Right ventricle myocardium superior (tissue), 1 donor: ENCODE measurements at regions of chr10 and their contacts with region 1.

Region 1: DNA sequence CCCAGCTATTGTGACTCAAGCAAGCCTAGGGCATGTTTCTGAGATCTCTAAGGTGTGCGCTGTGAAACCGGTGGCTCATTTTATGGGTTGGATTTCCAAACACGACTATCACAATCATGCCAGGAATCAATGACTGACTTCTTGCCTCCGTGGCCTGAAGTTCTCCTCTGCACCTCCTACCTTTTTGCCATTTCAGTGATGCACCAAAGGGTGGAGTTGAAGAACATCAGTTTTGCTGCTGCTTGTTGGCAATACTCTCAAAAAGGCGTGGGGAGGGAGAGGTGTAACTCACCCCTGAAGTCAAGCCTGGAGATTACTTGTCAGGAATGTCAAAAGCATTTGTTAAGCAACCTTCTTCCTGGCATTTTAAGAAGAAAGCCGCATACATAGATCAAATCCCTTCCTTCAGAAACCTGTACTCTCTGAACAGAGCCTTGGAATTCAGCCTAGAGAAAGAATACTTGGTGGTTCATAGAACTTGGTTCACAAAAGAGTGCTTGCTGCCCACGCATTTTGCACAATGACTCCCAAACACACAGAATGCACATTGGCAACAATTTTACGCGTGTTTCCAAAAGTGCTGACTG is 41.0 kb downstream of the KIAA1217 start:
- DNase-seq: no peak
- ATAC-seq: no peak

Region 2: GRCh38 chr10:23886355-23886754 is 363.6 kb before region 1 on chr10:
- intact Hi-C with region 1: no loop called
- DNase-seq: no peak
- ATAC-seq: peak; percentile 68

Region 3: GRCh38 chr10:24128066-24128730 is 121.7 kb before region 1 on chr10:
- intact Hi-C with region 1: no loop called
- DNase-seq: no peak
- ATAC-seq: no peak

Region 4: DNA sequence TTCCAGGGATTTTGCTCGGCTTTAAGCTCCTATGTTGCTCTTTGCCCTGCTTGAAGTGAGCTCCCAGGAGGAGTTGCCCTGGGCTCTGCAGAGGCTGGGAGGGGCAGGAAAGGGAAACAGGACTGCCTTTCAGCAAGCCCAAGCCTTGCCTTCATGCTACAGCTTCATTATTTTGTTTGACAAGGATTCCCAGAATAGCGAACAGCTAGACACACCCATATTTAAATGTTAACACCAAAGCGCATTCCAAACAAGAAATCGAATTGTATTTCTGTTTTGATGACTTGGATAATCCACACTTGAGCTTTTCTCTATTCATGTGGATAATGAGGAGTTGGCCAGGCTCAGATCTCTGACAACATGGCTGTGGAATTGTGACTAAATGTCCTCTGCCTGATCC is 34.7 kb before region 1 on chr10:
- intact Hi-C with region 1: loop called (anchors 5 kb)
- DNase-seq: peak; percentile 47
- ATAC-seq: peak; percentile 42

Region 5: DNA sequence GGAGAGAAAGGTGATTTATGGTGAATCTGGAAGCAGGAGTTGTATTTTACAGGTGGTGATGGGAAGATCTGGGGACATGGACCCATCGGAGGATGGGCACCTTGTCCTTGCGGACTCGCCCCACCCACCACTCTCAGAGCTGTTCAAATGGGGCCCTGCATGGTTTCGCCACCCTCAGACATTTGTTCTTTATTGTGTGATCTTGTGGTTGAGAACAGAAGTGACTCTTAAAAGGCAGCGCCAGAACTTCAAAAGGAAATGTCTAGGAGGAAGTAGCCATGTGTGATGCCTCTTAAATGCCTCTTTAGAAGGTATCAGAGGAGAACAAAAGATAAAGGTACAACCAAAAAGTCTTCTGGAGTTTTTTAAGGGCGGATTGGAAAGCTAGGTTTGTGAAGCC is 164.7 kb after region 1 on chr10:
- intact Hi-C with region 1: no loop called
- DNase-seq: no peak
- ATAC-seq: no peak